PC-9 (cell line): ENCODE measurements at regions of chr7 and their contacts with region 1.

Region 1: GRCh38 chr7:75575488-75576121 is 83.5 kb downstream of the SPDYE5 start:
- DNase-seq: no peak
- H3K4me3 ChIP-seq: no peak overlapping the region
- H3K27ac ChIP-seq: no peak overlapping the region
- H3K4me1 ChIP-seq: no peaks in the 10 kb centered on the region
- H3K27me3 ChIP-seq: no peaks in the 10 kb centered on the region
- CTCF ChIP-seq: no peak

Region 2: DNA sequence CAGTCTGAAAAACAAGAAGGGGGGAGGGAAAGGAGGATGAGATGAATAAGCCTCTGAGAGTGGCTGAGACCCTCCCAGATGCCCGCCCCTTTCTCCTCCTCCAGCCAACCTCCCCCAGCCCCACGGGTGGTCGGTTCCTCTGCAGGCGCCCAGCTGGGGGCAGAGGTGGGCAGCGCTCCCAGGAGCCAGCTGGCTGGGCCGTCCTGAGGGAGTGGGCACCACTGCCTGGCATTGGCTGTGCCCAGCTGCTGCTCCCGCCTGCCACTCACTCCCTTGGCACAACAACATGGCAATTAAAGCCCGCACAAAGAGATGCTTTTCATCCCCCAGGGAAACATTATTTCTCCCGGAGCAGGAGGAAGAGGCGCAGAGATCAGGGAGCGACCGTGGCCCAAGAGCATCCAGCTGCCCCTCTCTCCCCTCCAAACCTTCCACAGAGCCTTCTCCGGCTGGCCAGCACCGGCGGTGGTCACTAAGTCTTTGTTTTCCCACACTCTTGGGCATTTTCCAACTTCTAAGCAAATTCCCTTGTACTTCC is 23.7 kb after region 1 on chr7:
- CTCF ChIA-PET with region 1: no interaction called
- POLR2A ChIA-PET with region 1: interaction called, 19 read pairs
- intact Hi-C with region 1: no loop called
- DNase-seq: no peak
- H3K4me3 ChIP-seq: no peak overlapping the region
- H3K27ac ChIP-seq: no peak overlapping the region
- H3K4me1 ChIP-seq: peaks cover 38% of the 10 kb centered on the region
- H3K27me3 ChIP-seq: no peaks in the 10 kb centered on the region
- CTCF ChIP-seq: no peak